Mucosa of descending colon (tissue), 3 donors: ENCODE measurements at regions of chr11 and their contacts with region 1.

Region 1: DNA sequence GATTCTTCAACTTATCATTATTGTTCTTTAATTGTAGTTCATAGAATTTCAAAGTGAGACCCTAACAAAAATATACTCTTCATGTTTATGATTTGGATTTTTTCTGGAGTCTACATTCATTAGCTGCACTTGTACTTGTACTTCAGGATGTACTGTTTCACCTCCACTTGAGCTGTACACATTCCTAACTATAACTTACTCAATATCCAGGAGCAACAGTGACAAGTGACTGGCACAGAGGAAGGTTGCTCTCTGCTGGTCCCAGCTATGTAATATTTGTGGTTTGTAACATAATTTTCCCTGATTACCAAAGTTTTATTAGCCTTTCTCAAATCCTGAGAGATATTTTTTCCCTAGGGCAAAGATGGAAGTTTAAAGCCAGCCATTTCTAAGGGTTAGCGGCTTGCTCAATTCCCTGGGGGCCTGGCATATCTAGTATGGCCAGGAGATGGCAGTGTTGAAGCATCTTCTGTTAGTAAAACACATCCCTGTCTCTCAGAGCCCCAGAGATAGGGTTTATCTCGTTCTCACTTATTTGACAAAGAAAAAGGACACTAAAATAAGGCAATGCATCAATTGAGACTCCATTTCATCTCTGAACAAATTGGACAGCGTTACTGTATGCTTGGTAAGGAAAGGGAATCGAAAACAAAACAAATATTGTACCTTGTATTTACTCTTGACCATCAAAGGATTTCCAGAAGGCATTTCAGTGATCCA is 14.2 kb downstream of the OR52A5 start:
- DNase-seq: peak in 2 of 3 donors; percentile 31 to 72
- ATAC-seq: peak; percentile 66
- H3K4me3 ChIP-seq: no peak overlapping the region
- H3K4me1 ChIP-seq: no peaks in the 10 kb centered on the region
- CTCF ChIP-seq: peak; percentile 51

Region 2: DNA sequence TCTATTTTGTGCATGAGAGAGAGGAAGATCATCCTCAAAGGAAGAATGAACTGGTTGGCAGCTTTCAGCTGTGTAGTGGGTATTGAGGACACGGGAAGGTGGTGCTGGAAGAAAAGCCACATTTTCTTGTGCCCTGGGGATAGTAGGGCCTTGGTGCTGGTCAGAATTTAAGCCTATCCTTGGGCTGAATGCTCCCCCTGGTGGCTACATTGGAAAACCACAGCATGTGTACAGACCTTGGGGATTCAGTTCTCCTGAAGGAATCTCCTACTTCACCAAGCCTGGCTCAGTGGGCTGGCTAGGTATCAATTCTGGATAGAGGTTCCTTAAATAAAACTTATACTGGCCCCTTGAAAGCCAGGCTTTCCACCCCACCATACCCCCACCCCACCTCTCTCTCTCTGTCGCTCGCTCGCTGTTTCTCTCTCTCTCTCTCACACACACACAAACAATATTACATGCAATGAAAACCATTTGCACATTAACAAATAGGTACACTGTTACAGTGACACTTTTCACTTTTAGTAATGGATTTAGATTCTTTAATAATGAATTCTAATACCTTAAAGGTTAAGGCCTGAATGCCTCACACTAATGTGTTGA is 256.9 kb after region 1 on chr11:
- intact Hi-C with region 1: loop called in 1 of 2 experiments (anchors 10 kb)
- DNase-seq: peak in 2 of 3 donors; percentile 24 to 40
- ATAC-seq: peak; percentile 58
- H3K4me3 ChIP-seq: no peak overlapping the region
- H3K4me1 ChIP-seq: no peaks in the 10 kb centered on the region
- CTCF ChIP-seq: peak; percentile 38

Region 3: DNA sequence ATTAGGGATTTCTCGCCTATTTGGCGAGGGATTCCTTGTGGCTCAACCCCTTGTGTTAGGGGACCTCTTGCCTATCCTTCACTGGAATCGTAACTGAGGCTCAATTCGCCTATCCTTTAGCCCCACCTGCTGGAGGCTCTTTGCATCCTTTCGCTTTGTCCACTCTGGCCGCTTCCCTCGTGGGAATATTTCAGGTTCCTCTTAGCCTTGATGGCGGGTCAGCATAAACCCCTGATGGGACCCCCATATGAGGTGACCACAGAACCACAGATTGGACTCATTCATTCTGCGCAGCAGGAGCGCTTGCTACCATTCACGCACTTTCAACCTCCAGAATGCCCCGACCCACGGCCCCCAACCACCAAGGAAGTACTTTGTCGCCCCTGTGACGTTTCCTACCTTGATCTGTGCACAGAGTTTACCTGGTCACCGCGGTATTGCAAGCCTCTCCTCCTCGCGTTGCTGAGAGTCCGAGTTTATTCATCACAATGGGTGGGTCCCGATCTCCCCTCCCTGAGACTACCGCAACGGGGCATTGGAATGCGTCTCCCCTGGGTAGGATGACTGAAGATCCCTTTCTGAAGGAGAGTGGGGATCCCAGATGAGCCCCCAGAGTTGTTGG is 684.6 kb after region 1 on chr11 and contains the start of gene OR52N2:
- intact Hi-C with region 1: loop called in 1 of 2 experiments (anchors 5 kb)
- DNase-seq: peak in 2 of 3 donors; percentile 62 to 87
- ATAC-seq: peak; percentile 89
- H3K4me3 ChIP-seq: no peak within 1 kb of the TSS
- H3K4me1 ChIP-seq: no peaks in the 10 kb centered on the region
- CTCF ChIP-seq: peak; percentile 62
- total RNA-seq, gene OR52N2: not detected